Mammary epithelial cell (primary cell): ENCODE measurements at regions of chr1 and their contacts with region 1.

Region 1: DNA sequence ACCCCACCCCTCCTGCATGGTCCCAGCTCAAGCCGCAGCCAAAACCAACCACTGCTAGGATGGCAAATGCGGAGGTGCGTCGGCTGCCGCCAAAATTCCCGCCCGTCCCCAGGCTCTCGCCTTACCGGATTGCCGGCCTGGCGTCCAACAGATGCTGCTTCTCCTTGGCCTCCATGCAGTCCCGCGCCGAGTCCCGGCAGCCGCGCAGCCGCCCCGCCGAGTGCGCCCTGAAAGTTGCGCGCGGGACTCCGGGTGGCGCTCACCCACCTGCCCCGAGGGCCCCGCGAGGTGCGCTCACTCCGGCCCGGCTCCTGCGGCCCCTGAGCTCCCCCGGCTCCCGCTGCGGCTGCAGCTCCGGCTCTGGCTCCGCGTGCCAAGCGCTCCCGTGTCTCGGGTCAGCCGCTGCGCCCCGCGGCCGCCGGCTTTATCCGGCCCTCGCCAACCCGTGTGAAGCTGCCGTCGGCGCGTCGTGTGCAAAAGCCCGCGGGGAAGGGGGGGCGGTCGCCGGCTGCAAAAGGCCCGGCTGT is at the start of gene SLC30A2:
- DNase-seq: peak; percentile 12
- H3K4me3 ChIP-seq: no peak within 1 kb of the TSS
- H3K27ac ChIP-seq: no peak within 1 kb of the TSS
- H3K4me1 ChIP-seq: peaks cover 9% of the 10 kb centered on the region
- H3K27me3 ChIP-seq: peaks cover 26% of the 10 kb centered on the region
- CTCF ChIP-seq: no peak
- total RNA-seq, gene SLC30A2: under 0.01 TPM in 1 of 2 donors, not detected in the other

Region 2: GRCh38 chr1:25766721-25767436 is 278.9 kb before region 1 on chr1:
- CTCF ChIA-PET with region 1: no interaction called
- dilution Hi-C with region 1: no loop called
- in situ Hi-C with region 1: no loop called
- intact Hi-C with region 1: no loop called
- DNase-seq: no peak
- H3K4me3 ChIP-seq: no peak overlapping the region
- H3K27ac ChIP-seq: no peak overlapping the region
- H3K4me1 ChIP-seq: no peaks in the 10 kb centered on the region
- H3K27me3 ChIP-seq: no peaks in the 10 kb centered on the region
- CTCF ChIP-seq: no peak

Region 3: DNA sequence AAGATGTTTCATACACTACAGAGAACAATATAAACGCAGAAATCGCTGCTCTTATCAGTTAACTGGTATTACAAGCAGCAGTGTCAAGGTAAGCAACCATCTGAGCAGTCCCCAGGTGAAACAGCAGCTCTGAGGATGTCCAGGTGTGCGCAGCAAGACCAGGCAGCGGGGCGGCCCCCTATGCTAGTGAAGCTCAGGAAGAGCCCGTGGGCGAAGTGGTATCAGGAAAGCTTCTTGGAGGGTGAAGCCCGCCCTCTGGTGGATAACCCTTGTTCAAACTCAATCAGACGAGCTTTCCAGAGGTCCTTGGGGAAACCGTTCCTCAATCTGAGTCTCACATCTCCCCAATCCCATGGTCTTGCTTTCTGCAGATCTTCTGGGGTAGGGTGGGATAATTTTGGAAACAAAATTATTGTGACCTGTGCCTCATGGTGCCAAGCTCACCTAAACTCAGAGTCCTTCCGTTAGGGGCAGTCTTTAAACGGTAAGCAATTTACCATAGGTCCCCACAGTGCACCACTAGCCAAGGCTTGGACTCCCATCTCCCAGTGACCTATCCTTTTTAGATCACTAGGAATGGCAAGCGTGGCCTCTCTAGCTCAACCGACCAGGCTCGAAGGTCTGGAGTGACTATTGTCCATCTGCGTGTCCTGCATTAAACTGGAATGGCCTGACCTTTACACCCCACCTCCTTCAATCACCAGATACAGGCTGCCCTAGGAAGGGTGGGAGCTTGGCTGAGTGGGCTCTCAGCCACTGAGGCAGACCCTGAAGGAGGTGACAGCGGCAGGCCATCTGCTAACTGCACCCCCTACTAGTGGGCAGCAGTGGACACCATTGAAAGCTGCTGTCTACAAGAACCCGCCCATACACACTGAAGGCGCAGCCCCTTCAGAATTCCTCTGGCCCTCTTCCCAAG is 99.5 kb after region 1 on chr1:
- CTCF ChIA-PET with region 1: no interaction called
- dilution Hi-C with region 1: no loop called
- in situ Hi-C with region 1: loop called (anchors 10 to 25 kb)
- intact Hi-C with region 1: no loop called
- DNase-seq: peak; percentile 62
- H3K4me3 ChIP-seq: no peak overlapping the region
- H3K27ac ChIP-seq: no peak overlapping the region
- H3K4me1 ChIP-seq: no peaks in the 10 kb centered on the region
- H3K27me3 ChIP-seq: no peaks in the 10 kb centered on the region
- CTCF ChIP-seq: peak; percentile 59 to 77